ENCODE measurements at regions of chr16 and their contacts with region 1.

Region 1: DNA sequence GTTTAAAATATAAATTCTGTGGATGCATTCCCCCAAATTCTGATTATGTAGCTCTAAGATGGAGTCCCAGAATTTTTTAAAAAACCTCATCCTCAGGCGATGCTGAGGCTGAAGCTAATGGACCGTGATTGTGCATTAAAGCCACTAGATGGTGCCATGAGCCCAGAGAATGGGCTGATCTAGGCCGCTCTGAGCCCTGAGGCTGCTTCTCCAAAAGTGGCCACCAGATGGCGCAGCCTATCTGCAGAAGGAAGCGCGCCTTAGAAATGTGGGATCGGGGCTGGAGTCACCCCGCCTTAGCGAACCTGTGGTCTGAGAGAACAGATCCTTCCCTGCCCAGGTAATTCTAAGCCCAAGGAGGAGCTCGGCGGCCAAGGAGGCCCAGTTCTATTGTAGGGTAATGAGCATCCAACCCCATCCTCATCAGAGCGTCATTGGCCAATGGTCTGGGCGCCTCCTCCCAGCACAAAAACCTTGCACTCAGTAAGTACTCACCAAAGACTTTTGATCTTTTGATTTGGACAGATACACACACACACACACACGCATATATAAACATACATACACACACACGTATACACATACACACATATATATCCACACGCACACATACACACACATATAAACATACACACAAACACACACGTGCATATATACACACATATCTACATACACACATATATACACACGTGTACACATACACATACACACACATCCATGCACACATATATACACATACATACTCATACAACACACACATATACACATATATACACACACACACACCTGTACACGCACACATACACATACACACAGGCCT is 13.7 kb upstream of the MMP2 start:
- DNase-seq: peak; percentile 73
- H3K4me3 Mint-ChIP-seq: no peak overlapping the region
- H3K27ac Mint-ChIP-seq: no peak overlapping the region
- H3K4me1 Mint-ChIP-seq: peaks cover 4% of the 10 kb centered on the region
- H3K27me3 Mint-ChIP-seq: peaks cover 3% of the 10 kb centered on the region

Region 2: GRCh38 chr16:55043499-55043898 is 421.8 kb before region 1 on chr16:
- intact Hi-C with region 1: no loop called
- DNase-seq: no peak
- H3K4me3 Mint-ChIP-seq: no peak overlapping the region
- H3K27ac Mint-ChIP-seq: no peak overlapping the region
- H3K4me1 Mint-ChIP-seq: no peaks in the 10 kb centered on the region
- H3K27me3 Mint-ChIP-seq: no peaks in the 10 kb centered on the region

Region 3: GRCh38 chr16:55056585-55057401 is 408.5 kb before region 1 on chr16:
- intact Hi-C with region 1: no loop called
- DNase-seq: no peak
- H3K4me3 Mint-ChIP-seq: no peak overlapping the region
- H3K27ac Mint-ChIP-seq: no peak overlapping the region
- H3K4me1 Mint-ChIP-seq: no peaks in the 10 kb centered on the region
- H3K27me3 Mint-ChIP-seq: peaks cover 32% of the 10 kb centered on the region

Region 4: GRCh38 chr16:55543472-55543871 is 78.2 kb after region 1 on chr16:
- intact Hi-C with region 1: loop called (anchors 1 kb)
- DNase-seq: no peak
- H3K4me3 Mint-ChIP-seq: no peak overlapping the region
- H3K27ac Mint-ChIP-seq: no peak overlapping the region
- H3K4me1 Mint-ChIP-seq: no peaks in the 10 kb centered on the region
- H3K27me3 Mint-ChIP-seq: no peaks in the 10 kb centered on the region

Region 5: DNA sequence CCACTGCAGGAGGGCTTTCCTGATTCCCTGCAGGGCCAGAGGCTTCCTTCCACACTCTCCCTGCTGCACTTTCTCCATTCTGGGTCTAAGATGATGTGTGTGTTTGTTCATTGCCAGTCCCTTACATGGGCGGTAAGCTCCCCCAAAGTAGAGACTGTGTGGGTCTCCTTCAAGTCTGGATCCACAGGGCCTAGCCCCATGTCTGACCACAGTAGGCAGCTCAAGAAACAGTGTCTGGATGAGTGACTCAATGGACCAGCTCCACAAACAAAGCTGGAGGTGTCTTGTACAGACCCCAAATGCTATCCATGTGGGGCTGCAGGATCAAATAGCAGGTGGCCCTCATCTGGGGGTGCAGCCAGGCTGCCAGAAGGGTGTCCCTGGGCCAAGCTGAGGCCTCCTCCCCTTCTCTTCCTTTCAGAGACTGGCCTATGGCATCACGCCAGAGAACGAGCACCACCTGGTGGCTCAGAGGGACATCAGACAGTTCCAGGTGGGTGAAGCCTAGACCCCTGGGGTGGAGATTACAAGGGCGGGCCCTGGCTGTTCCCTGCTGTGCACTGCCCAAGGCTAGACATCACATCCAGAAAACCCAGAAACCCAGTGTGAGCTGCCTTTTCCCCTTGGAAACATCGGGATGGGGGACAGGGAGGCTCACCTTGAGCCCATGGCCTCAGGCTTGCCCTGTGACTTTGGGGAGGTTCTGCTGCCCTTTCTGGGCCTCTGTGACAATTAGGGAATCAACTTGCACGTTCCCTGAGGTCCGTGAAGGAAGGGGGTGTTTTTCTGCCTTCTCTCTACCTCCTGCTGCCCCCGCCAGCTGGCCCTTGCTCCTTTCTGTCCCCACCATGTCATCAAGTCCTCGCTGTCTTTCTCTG is 236.4 kb after region 1 on chr16:
- intact Hi-C with region 1: loop called (anchors 1 kb)
- DNase-seq: peak; percentile 16
- H3K4me3 Mint-ChIP-seq: no peak overlapping the region
- H3K27ac Mint-ChIP-seq: no peak overlapping the region
- H3K4me1 Mint-ChIP-seq: peaks cover 9% of the 10 kb centered on the region
- H3K27me3 Mint-ChIP-seq: peaks cover 4% of the 10 kb centered on the region

Region 6: GRCh38 chr16:55842369-55843104 is 377.2 kb after region 1 on chr16:
- intact Hi-C with region 1: loop called (anchors 2 kb)
- DNase-seq: no peak
- H3K4me3 Mint-ChIP-seq: no peak overlapping the region
- H3K27ac Mint-ChIP-seq: no peak overlapping the region
- H3K4me1 Mint-ChIP-seq: no peaks in the 10 kb centered on the region
- H3K27me3 Mint-ChIP-seq: peaks cover 8% of the 10 kb centered on the region

Measured in activated T-helper 2 cell treated with anti-CD3 and anti-CD28 coated beads, Interferon-gamma antibody, Interleukin-2, Interleukin-4, amounts not matched to agents 10 μg/mL and 5 μg/mL and 100 μg/mL, durations not matched to agents 14 hours and 24 hours and 36 hours (primary cell).